Activated T-helper 1 cell treated with anti-CD3 and anti-CD28 coated beads, Interleukin-12 subunit alpha, Interleukin-12 subunit beta, Interleukin-2, Interleukin-4 antibody, amounts not matched to agents 30 ng/mL and 10 ng/mL and 1 ng/mL, durations not matched to agents 14 hours and 24 hours and 36 hours (primary cell): ENCODE measurements at regions of chr2 and their contacts with region 1.

Region 1: DNA sequence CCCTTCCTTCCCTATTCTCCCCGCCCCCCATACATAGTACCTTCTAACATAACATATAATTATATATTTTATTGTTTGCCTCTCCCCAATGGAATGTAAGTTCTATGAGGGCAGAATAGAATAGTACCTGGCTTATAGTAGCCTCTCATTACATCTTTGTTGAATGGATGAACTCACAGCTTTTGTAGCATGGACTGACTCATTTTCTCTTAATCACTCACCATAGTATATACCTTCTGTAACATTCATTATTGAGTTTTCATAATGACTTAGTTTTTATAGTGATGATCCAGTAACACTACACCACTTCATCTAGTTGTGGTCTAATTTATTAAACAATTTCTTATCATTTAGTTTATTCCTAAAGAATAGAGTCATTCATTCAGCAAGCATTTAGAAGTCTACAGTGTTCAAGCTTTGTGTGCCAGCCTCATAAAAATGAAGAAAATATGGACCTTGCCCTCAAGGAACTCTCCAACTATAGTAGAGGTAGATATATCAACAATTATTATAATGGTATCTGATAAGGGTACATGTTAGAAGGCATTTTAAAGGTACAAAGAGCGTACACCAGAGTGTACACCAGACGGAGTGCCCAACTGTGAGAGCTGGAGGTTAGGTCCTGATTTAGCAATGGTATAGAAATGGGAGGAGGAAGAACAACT is 31.1 kb downstream of the NCOA1 start:
- DNase-seq: no peak
- H3K4me3 Mint-ChIP-seq: peak overlapping the region; percentile 49
- H3K27ac Mint-ChIP-seq: peak overlapping the region; percentile 62
- H3K4me1 Mint-ChIP-seq: peaks cover 31% of the 10 kb centered on the region
- H3K27me3 Mint-ChIP-seq: no peaks in the 10 kb centered on the region

Region 2: DNA sequence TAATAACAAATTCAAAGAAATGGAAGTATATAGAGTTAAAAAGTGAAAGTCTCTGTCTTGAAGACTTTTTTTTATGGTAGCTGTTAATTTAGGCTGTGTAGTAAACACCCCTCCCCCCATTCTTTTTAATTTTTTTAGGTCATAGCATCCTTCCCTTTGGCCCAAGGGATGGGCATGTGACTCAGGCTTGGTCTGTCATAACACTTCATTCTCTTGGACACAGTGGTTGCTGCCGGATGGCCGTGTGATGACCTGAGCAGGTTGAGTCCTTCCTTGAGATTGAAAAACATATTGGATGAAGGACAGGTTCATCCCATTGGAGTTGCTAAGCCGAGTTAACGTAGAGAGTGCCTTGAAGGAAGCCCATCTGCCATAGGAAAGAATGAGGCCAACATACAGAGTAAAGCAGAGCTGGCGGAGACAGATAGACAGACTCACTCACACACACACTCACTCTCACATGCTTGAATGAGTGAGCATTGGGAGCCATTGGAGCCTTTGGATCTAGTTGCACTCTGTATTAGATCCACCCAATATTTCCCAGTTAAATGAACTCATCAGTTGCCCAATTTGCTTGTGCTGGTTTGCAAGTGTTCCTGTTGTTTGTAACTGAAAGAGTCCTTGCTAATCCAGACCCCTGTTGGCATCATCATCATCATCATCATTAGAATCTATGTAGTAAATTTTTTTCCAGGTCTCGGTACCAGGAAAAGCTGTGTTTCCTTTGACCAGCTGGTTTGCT is 16.4 kb before region 1 on chr2:
- intact Hi-C with region 1: loop called (anchors 2 kb)
- DNase-seq: no peak
- H3K4me3 Mint-ChIP-seq: no peak overlapping the region
- H3K27ac Mint-ChIP-seq: no peak overlapping the region
- H3K4me1 Mint-ChIP-seq: peaks cover 21% of the 10 kb centered on the region
- H3K27me3 Mint-ChIP-seq: peaks cover 3% of the 10 kb centered on the region

Region 3: DNA sequence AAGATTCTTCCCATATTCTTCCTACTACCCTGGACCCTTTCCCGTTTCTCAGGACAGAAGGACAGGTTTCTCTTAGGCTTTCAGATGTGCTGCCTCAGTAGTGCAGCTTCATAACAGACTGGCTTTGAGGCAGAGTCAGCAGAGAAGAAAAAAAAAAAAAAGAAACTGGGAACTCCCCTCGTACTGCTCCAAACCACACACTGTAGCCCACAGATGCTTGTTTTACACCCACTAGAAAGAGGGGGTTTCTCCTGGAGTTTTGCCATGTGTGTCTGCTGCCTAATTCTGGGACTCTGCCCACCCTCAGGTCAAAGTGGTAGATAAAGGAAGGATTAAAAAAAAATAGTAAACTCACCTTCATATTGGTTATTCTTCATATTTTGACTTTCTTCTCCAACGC is 64.8 kb after region 1 on chr2:
- intact Hi-C with region 1: loop called (anchors 1 kb)
- DNase-seq: peak; percentile 18
- H3K4me3 Mint-ChIP-seq: peak overlapping the region; percentile 19
- H3K27ac Mint-ChIP-seq: peak overlapping the region; percentile 72
- H3K4me1 Mint-ChIP-seq: peaks cover 51% of the 10 kb centered on the region
- H3K27me3 Mint-ChIP-seq: no peaks in the 10 kb centered on the region

Region 4: DNA sequence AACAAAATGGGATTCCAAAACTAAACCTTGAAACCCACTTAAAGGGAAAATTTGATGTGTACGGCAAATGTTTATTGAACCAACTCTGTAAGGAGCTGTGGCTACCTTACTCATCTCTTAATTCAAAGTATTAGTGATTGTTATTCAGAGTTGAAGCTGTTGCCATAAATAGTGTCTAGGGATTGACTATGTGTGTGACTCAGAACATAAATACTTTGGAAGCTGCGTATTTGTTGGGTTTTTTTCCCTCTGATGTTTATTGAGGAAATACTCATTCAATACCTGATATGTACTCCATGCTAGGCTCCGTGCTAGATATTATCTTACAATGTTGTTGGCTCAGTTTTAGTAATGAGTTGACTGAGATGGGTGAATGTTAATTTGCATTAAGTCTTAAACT is 180.7 kb after region 1 on chr2:
- intact Hi-C with region 1: loop called (anchors 5 kb)
- DNase-seq: no peak
- H3K4me3 Mint-ChIP-seq: no peak overlapping the region
- H3K27ac Mint-ChIP-seq: peak overlapping the region; percentile 4
- H3K4me1 Mint-ChIP-seq: peaks cover 5% of the 10 kb centered on the region
- H3K27me3 Mint-ChIP-seq: no peaks in the 10 kb centered on the region

Region 5: GRCh38 chr2:24827321-24828237 is 305.5 kb after region 1 on chr2:
- intact Hi-C with region 1: no loop called
- DNase-seq: peak; percentile 65
- H3K4me3 Mint-ChIP-seq: no peak overlapping the region
- H3K27ac Mint-ChIP-seq: peak overlapping the region; percentile 86
- H3K4me1 Mint-ChIP-seq: peaks cover 25% of the 10 kb centered on the region
- H3K27me3 Mint-ChIP-seq: no peaks in the 10 kb centered on the region

Region 6: DNA sequence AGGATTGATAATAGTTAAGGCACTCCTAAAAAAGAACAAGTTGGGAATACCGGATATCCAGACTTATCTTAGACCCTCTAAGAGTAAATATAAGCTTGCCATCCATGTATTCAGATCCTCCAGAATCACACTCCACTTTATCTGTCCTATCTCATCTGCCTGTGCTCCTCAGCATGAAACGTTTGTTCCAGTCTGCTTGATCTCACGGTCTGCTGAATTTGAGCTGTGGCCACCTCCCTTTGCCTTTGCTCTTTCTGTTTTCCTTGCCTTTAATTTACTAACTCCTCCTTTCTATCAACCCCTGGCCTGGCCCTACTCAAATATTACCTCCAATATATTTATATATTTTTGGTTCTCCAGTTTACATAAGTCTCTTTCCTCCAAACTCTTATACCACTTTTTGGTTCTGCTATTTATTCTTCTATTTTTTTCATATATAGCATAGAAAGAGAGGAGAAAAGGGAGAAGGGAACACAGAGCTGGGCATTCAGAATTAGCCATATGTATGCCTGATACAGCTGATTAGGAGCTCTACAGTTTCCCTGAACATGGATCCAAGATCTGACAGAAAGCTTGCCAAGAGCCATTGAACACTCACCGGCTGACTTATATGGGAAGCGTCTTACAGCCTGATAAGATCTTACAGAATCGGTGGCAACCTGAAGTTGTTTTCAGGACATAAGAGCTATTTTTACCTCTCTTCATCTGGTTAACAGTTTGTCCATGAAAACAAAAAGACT is 471.5 kb after region 1 on chr2:
- intact Hi-C with region 1: no loop called
- DNase-seq: no peak
- H3K4me3 Mint-ChIP-seq: no peak overlapping the region
- H3K27ac Mint-ChIP-seq: no peak overlapping the region
- H3K4me1 Mint-ChIP-seq: no peaks in the 10 kb centered on the region
- H3K27me3 Mint-ChIP-seq: peaks cover 23% of the 10 kb centered on the region